Activated CD8-positive, alpha-beta memory T cell treated with anti-CD3 and anti-CD28 coated beads, Interleukin-2, amount 10 ng/mL, durations not matched to agents 7 days and 5 days (primary cell): ENCODE measurements at regions of chr11 and their contacts with region 1.

Region 1: GRCh38 chr11:46554205-46555055 is 39.4 kb downstream of the AMBRA1 start:
- DNase-seq: no peak
- ATAC-seq: no peak
- H3K4me3 Mint-ChIP-seq: no peak overlapping the region
- H3K27ac Mint-ChIP-seq: peak overlapping the region; percentile 58
- H3K4me1 Mint-ChIP-seq: peaks cover 51% of the 10 kb centered on the region
- H3K27me3 Mint-ChIP-seq: no peaks in the 10 kb centered on the region

Region 2: GRCh38 chr11:46461461-46461927 is 92.9 kb before region 1 on chr11:
- CTCF ChIA-PET with region 1: no interaction called
- DNase-seq: no peak
- ATAC-seq: no peak
- H3K4me3 Mint-ChIP-seq: no peak overlapping the region
- H3K27ac Mint-ChIP-seq: no peak overlapping the region
- H3K4me1 Mint-ChIP-seq: no peaks in the 10 kb centered on the region
- H3K27me3 Mint-ChIP-seq: no peaks in the 10 kb centered on the region

Region 3: GRCh38 chr11:46570790-46571398 is 16.5 kb after region 1 on chr11:
- CTCF ChIA-PET with region 1: interaction called, 14 read pairs
- DNase-seq: no peak
- ATAC-seq: peak; percentile 57
- H3K4me3 Mint-ChIP-seq: no peak overlapping the region
- H3K27ac Mint-ChIP-seq: peak overlapping the region; percentile 29
- H3K4me1 Mint-ChIP-seq: peaks cover 28% of the 10 kb centered on the region
- H3K27me3 Mint-ChIP-seq: no peaks in the 10 kb centered on the region

Region 4: GRCh38 chr11:47004595-47005033 is 450.2 kb after region 1 on chr11:
- CTCF ChIA-PET with region 1: no interaction called
- DNase-seq: no peak
- ATAC-seq: no peak
- H3K4me3 Mint-ChIP-seq: no peak overlapping the region
- H3K27ac Mint-ChIP-seq: no peak overlapping the region
- H3K4me1 Mint-ChIP-seq: peaks cover 13% of the 10 kb centered on the region
- H3K27me3 Mint-ChIP-seq: no peaks in the 10 kb centered on the region